ENCODE measurements at regions of chr2 and their contacts with region 1.

Region 1: DNA sequence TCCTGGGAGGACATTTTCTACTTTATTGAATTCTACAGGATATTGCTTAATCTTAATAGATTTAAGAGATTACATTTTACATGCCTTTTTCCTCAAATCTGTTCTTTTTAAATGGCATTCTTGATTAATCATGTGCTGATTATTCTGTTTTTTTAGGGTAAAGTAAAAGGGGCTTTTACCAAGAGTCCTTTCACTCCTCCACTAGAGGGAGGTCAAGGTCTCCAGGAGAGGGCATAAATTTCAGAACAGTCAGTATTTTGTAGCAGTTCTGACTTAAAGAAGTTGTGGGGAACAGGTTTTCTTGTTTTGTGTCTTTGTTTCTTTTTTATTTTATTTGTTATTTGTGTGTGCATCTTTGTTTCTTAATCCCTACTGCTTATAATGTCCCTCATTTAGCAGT is 25.4 kb downstream of the WDR75 start:
- DNase-seq: no peak
- H3K4me3 ChIP-seq: no peak overlapping the region
- H3K27ac ChIP-seq: peak overlapping the region in 1 of 2 donors; percentile 6
- H3K4me1 ChIP-seq: peaks cover 0 to 11% (median 0%) of the 10 kb centered on the region in 4 donors
- H3K27me3 ChIP-seq: no peaks in the 10 kb centered on the region
- CTCF ChIP-seq: peak; percentile 76 to 79

Region 2: GRCh38 chr2:189570570-189571031 is 103.9 kb after region 1 on chr2:
- intact Hi-C with region 1: loop called (anchors 5 kb)
- DNase-seq: no peak
- H3K4me3 ChIP-seq: no peak overlapping the region
- H3K27ac ChIP-seq: peak overlapping the region; percentile 38 to 76
- H3K4me1 ChIP-seq: peaks cover 0 to 97% (median 31%) of the 10 kb centered on the region in 4 donors
- H3K27me3 ChIP-seq: no peaks in the 10 kb centered on the region
- CTCF ChIP-seq: no peak

Measured in tibial artery (tissue), 4 donors.